ENCODE measurements at regions of chr11 and their contacts with region 1.

Region 1: GRCh38 chr11:107457558-107458271 is at the start of gene CWF19L2:
- DNase-seq: peak; percentile 62 to 94 (median 92)
- ATAC-seq: peak; percentile 99
- H3K4me3 ChIP-seq: peak within 1 kb of the TSS; percentile 91
- H3K4me3 Mint-ChIP-seq: peak within 1 kb of the TSS; percentile 84 to 100 (median 93)
- H3K27ac ChIP-seq: peak within 1 kb of the TSS; percentile 82
- H3K27ac Mint-ChIP-seq: peak within 1 kb of the TSS; percentile 87 to 98 (median 96)
- H3K4me1 ChIP-seq: peaks cover 7 to 13% of the 10 kb centered on the region in 2 donors
- H3K4me1 Mint-ChIP-seq: peaks cover 19 to 50% (median 32%) of the 10 kb centered on the region in 7 donors
- H3K27me3 ChIP-seq: no peaks in the 10 kb centered on the region
- H3K27me3 Mint-ChIP-seq: peaks cover 0 to 10% (median 0%) of the 10 kb centered on the region in 5 donors
- total RNA-seq, gene CWF19L2: 17.0 to 38.9 (median 27.2) TPM

Region 2: DNA sequence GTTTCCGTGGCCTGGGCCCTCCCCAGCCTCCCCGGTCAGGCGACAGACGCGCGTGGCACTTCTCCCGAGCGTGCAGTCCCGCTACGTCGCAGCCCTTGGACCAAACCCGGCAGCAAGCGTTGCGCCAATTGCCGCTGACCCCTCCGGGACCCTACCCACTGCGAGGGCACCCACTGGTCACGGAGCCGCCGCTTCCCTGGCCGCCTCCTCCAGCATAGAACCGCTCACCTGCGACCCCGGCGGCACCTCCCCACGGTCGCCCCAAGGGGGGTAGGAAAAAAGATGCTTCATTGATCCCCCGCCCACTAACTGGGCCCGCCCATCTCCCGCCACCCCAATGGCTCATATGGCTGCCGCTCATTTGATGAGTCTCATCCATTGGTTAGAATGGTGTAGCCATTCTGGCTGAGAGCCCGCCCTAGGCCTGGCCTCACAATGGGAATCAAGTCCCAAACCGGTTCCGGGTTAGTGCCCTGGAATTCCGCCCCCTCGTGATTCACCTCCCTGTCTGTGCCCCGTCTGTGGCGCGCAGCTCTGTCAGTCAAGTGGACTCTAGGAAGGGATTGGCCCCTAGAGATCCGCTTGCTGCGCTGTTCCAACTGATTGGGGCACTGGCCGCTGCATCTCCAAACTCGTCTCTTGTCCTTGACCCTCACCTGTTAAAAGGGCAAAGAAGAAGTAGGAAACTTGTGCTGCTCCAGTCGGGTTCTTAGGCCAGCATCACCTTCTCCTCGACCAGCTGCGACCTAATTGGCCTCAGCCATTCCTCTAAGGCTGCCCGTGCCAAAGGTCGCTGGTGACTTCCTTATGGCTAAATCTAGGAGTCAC is 1435.5 kb before region 1 on chr11 and contains the start of gene MSANTD4:
- CTCF ChIA-PET with region 1: no interaction called
- POLR2A ChIA-PET with region 1: no interaction called
- intact Hi-C with region 1: loop called (anchors 1 to 5 kb)
- DNase-seq: peak; percentile 89 to 97 (median 95)
- ATAC-seq: peak; percentile 98
- H3K4me3 ChIP-seq: peak within 1 kb of the TSS; percentile 82
- H3K4me3 Mint-ChIP-seq: peak within 1 kb of the TSS; percentile 91 to 99 (median 94)
- H3K27ac ChIP-seq: peak within 1 kb of the TSS; percentile 66
- H3K27ac Mint-ChIP-seq: peak within 1 kb of the TSS; percentile 82 to 96 (median 89)
- H3K4me1 ChIP-seq: peaks cover 10 to 20% of the 10 kb centered on the region in 2 donors
- H3K4me1 Mint-ChIP-seq: peaks cover 34 to 60% (median 49%) of the 10 kb centered on the region in 7 donors
- H3K27me3 ChIP-seq: no peaks in the 10 kb centered on the region
- H3K27me3 Mint-ChIP-seq: peaks cover 0 to 13% (median 6%) of the 10 kb centered on the region in 5 donors
- total RNA-seq, gene MSANTD4: 4.7 to 18.7 (median 15.3) TPM

Region 3: DNA sequence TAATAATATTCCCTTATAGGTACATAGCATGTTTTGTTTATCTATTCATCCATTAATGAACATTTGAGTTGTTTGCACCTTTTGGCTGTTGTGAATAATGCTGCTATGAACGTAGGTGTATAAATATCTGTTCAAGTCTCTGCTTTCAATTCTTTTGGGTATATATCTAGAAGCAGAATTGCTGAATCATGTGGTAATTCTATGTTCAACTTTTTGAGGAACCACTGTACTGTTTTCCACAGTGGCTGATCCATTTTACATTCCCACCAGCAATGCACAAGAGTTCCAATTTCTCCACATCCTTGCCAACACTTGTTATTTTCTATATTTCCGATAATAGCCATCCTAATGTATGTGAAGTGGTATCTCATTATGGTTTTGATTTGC is 51.1 kb after region 1 on chr11:
- CTCF ChIA-PET with region 1: no interaction called
- POLR2A ChIA-PET with region 1: no interaction called
- intact Hi-C with region 1: loop called in 1 of 2 experiments (anchors 2 kb)
- DNase-seq: no peak
- ATAC-seq: no peak
- H3K4me3 ChIP-seq: no peak overlapping the region
- H3K4me3 Mint-ChIP-seq: no peak overlapping the region
- H3K27ac ChIP-seq: no peak overlapping the region
- H3K27ac Mint-ChIP-seq: no peak overlapping the region
- H3K4me1 ChIP-seq: no peaks in the 10 kb centered on the region
- H3K4me1 Mint-ChIP-seq: no peaks in the 10 kb centered on the region
- H3K27me3 ChIP-seq: no peaks in the 10 kb centered on the region
- H3K27me3 Mint-ChIP-seq: no peaks in the 10 kb centered on the region

Region 4: GRCh38 chr11:107858217-107859070 is 400.7 kb after region 1 on chr11 and contains the start of gene SLC35F2:
- CTCF ChIA-PET with region 1: no interaction called
- POLR2A ChIA-PET with region 1: no interaction called
- intact Hi-C with region 1: loop called (anchors 1 to 5 kb)
- DNase-seq: peak; percentile 15 to 81 (median 45)
- ATAC-seq: peak; percentile 88
- H3K4me3 ChIP-seq: peak within 1 kb of the TSS; percentile 88
- H3K4me3 Mint-ChIP-seq: peak within 1 kb of the TSS; percentile 89 to 98 (median 95)
- H3K27ac ChIP-seq: peak within 1 kb of the TSS; percentile 65
- H3K27ac Mint-ChIP-seq: peak within 1 kb of the TSS; percentile 21 to 88 (median 77)
- H3K4me1 ChIP-seq: no peaks in the 10 kb centered on the region
- H3K4me1 Mint-ChIP-seq: peaks cover 5 to 33% (median 26%) of the 10 kb centered on the region in 7 donors
- H3K27me3 ChIP-seq: no peaks in the 10 kb centered on the region
- H3K27me3 Mint-ChIP-seq: peaks cover 0 to 17% (median 4%) of the 10 kb centered on the region in 5 donors
- total RNA-seq, gene SLC35F2: 3.8 to 8.9 (median 4.5) TPM

Region 5: DNA sequence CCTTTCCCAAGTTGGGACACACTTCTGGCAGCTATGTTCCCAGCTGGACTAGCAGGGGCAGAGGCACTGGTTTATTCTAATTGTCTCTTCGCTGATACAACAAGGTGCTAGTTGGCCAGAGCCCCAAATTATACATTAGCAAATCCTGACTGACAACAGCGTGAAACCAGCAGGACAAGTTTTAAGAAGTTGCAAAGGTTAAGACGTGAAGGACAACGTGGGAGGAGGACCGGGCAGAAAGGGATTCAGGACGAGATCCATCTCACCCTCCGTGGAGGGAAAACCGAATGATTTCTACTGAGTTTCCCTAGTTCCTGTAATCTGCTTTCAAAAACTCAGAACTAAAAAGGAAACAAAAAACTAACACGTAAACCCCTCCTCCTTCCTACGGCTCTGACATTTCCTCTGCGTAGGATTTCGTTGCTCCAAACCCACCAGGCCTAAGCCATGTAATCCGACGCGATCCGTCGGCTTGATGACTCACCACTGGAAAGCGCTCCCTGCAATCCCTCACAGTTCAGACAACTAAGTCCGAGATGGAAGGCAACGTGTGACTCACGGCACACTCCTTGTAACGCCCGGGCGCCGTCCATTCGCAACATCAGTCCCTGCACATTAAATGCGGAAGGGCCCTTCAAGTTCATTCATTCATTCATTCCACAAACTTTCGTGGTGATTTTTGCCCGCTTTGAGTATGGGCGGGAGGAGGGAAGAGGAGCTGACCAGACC is 1039.8 kb after region 1 on chr11:
- CTCF ChIA-PET with region 1: no interaction called
- POLR2A ChIA-PET with region 1: no interaction called
- intact Hi-C with region 1: loop called in 1 of 2 experiments (anchors 5 kb)
- DNase-seq: peak in 8 of 9 donors; percentile 68 to 83 (median 76)
- ATAC-seq: peak; percentile 92
- H3K4me3 ChIP-seq: peak overlapping the region; percentile 77
- H3K4me3 Mint-ChIP-seq: peak overlapping the region; percentile 95 to 100 (median 98)
- H3K27ac ChIP-seq: peak overlapping the region; percentile 87
- H3K27ac Mint-ChIP-seq: peak overlapping the region; percentile 95 to 100 (median 99)
- H3K4me1 ChIP-seq: peaks cover 0 to 3% of the 10 kb centered on the region in 2 donors
- H3K4me1 Mint-ChIP-seq: peaks cover 8 to 33% (median 24%) of the 10 kb centered on the region in 7 donors
- H3K27me3 ChIP-seq: no peaks in the 10 kb centered on the region
- H3K27me3 Mint-ChIP-seq: no peaks in the 10 kb centered on the region

Region 6: DNA sequence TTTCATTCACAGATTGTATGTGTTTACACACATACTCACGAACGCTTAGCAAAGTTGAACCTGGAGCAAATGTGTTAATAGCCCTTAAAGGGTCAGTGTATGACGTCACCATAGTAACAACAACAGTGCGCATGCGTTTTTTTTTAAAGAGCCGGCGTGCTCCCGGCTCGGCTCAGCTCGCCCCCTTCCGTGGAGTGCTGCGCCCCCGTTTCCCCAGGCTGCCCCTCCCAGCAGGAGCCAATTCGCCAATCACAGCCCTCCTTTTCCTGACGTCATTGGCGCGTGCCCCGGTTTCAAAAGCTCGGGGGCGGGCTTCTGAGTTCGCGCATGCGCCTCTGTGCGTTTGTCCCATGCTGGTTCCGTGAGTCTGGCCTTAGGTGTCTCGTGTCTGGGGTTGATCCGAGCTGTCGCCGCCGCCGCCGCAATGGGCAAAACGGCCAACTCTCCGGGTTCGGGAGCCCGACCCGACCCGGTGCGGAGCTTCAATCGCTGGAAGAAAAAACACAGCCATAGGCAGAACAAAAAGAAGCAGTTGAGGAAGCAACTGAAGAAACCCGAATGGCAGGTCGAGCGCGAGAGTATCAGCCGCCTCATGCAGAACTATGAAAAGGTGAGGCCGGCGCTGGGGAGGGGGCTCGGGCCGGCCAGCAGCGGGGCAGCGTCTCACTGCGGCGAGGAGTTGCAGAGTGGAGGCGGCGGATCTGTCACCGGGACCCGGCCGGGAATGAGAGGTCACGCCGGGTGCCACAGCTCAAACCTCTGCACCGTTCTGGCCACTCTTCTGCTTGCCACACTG is 1207.2 kb after region 1 on chr11 and contains the start of gene DDX10:
- CTCF ChIA-PET with region 1: no interaction called
- POLR2A ChIA-PET with region 1: no interaction called
- intact Hi-C with region 1: loop called in 1 of 2 experiments (anchors 2 kb)
- DNase-seq: peak; percentile 95 to 99 (median 98)
- ATAC-seq: peak; percentile 99
- H3K4me3 ChIP-seq: peak within 1 kb of the TSS; percentile 80
- H3K4me3 Mint-ChIP-seq: peak within 1 kb of the TSS; percentile 91 to 100 (median 100)
- H3K27ac ChIP-seq: peak within 1 kb of the TSS; percentile 77
- H3K27ac Mint-ChIP-seq: peak within 1 kb of the TSS; percentile 79 to 100 (median 97)
- H3K4me1 ChIP-seq: peaks cover 18 to 22% of the 10 kb centered on the region in 2 donors
- H3K4me1 Mint-ChIP-seq: peaks cover 24 to 56% (median 47%) of the 10 kb centered on the region in 7 donors
- H3K27me3 ChIP-seq: no peaks in the 10 kb centered on the region
- H3K27me3 Mint-ChIP-seq: peaks cover 0 to 9% (median 0%) of the 10 kb centered on the region in 5 donors
- total RNA-seq, gene DDX10: 16.7 to 34.6 (median 22.8) TPM

Measured in naive thymus-derived CD4-positive, alpha-beta T cell (primary cell).